Endothelial cell of umbilical vein (primary cell): ENCODE measurements at regions of chr1 and their contacts with region 1.

Region 1: GRCh38 chr1:71049951-71050598 is 2.5 kb upstream of the PTGER3 start:
- DNase-seq: peak; percentile 79
- H3K4me3 ChIP-seq: no peak overlapping the region
- H3K27ac ChIP-seq: no peak overlapping the region
- H3K4me1 ChIP-seq: peaks cover 9% of the 10 kb centered on the region
- H3K27me3 ChIP-seq: peaks cover 40 to 54% of the 10 kb centered on the region in 2 experiments
- CTCF ChIP-seq: peak; percentile 51 to 56
- POLR2A ChIP-seq: no peak

Region 2: DNA sequence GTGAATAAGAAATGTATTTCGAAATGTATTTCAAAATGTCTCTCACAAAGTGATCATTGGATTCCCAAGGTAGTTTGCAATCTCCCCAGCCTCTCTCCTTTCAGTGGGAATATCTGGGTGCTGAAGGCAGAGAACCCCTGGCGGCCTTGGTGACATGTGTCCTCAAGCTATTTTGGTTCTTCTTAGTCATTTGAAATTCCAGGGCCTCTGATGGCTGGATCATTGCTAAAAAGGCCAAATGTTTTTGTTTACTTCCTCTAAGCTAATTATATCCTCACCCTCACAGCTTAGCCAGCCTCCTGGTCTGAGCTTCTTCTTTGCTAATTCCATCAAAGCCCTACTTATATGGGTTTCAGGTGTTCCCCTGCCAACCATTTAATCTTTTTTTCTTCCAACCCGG is 915.9 kb before region 1 on chr1:
- CTCF ChIA-PET with region 1: no interaction called
- POLR2A ChIA-PET with region 1: no interaction called
- dilution Hi-C with region 1: no loop called
- intact Hi-C with region 1: loop called (anchors 2 kb)
- DNase-seq: no peak
- H3K4me3 ChIP-seq: no peak overlapping the region
- H3K27ac ChIP-seq: no peak overlapping the region
- H3K4me1 ChIP-seq: no peaks in the 10 kb centered on the region
- H3K27me3 ChIP-seq: no peaks in the 10 kb centered on the region
- CTCF ChIP-seq: no peak
- POLR2A ChIP-seq: no peak

Region 3: GRCh38 chr1:70528590-70529333 is 521.3 kb before region 1 on chr1:
- CTCF ChIA-PET with region 1: interaction called, 31 read pairs
- POLR2A ChIA-PET with region 1: no interaction called
- dilution Hi-C with region 1: no loop called
- intact Hi-C with region 1: loop called (anchors 1 kb)
- DNase-seq: peak; percentile 26
- H3K4me3 ChIP-seq: no peak overlapping the region
- H3K27ac ChIP-seq: no peak overlapping the region
- H3K4me1 ChIP-seq: no peaks in the 10 kb centered on the region
- H3K27me3 ChIP-seq: peaks cover 5 to 12% of the 10 kb centered on the region in 2 experiments
- CTCF ChIP-seq: peak; percentile 29 to 53
- POLR2A ChIP-seq: no peak

Region 4: DNA sequence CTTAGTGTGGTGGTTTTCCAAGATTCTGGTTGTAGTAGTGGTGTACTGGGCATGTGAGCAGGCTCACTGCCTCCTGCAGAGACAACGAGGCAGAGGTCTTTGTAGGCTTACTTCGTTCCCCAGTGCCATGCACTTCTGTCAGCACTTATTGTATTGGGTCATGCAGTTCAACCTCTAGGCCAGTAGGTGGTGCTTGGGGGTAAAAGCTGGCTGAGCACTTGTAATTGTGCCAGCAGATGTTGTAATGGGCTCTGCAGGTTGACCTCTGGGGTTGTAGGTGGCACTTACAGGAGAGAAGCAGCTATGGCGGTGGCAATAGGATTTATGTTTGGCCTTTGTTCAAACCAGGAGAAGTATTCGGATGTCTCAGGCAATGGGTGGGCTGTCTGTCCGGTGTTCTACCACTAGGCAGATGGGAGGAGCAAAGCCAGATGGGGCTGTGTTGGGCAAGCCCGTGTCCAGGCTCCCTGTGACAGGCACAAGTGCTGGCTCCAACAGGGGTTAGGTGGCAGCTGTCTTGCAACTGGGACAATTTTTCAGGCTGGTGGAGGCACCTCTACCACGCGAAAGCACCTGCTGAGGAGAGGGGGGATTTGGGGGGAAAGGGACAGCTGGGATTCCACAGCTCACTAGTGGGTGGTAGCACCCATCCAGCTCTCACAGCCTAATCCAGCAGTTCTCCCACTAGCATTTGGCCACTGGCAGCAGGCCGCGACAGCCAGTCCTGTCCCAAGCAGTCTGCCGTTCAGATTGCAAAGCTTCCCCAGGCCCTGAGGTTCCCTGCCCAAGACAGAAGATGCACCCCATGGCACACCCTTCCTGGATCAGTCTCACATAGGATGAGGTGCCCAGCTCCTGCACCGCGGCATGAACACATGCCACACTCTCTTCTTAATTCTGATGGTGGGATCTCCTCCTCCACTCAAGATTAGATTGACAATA is 364.5 kb before region 1 on chr1:
- CTCF ChIA-PET with region 1: interaction called, 35 read pairs
- POLR2A ChIA-PET with region 1: no interaction called
- dilution Hi-C with region 1: no loop called
- intact Hi-C with region 1: loop called (anchors 1 kb)
- DNase-seq: peak; percentile 64
- H3K4me3 ChIP-seq: no peak overlapping the region
- H3K27ac ChIP-seq: no peak overlapping the region
- H3K4me1 ChIP-seq: no peaks in the 10 kb centered on the region
- H3K27me3 ChIP-seq: no peaks in the 10 kb centered on the region
- CTCF ChIP-seq: peak; percentile 65 to 81
- POLR2A ChIP-seq: no peak

Region 5: GRCh38 chr1:71919811-71920509 is 869.9 kb after region 1 on chr1:
- CTCF ChIA-PET with region 1: no interaction called
- POLR2A ChIA-PET with region 1: no interaction called
- dilution Hi-C with region 1: no loop called
- intact Hi-C with region 1: no loop called
- DNase-seq: no peak
- H3K4me3 ChIP-seq: no peak overlapping the region
- H3K27ac ChIP-seq: no peak overlapping the region
- H3K4me1 ChIP-seq: no peaks in the 10 kb centered on the region
- H3K27me3 ChIP-seq: no peaks in the 10 kb centered on the region
- CTCF ChIP-seq: no peak
- POLR2A ChIP-seq: no peak